Natural killer cell (primary cell): ENCODE measurements at regions of chr4 and their contacts with region 1.

Region 1: GRCh38 chr4:68375667-68376559 is 26.0 kb upstream of the YTHDC1 start:
- DNase-seq: peak in 1 of 2 donors; percentile 80
- ATAC-seq: peak; percentile 82 to 92 (median 87)
- H3K4me3 ChIP-seq: no peak overlapping the region
- H3K4me3 Mint-ChIP-seq: no peak overlapping the region
- H3K27ac ChIP-seq: no peak overlapping the region
- H3K27ac Mint-ChIP-seq: no peak overlapping the region
- H3K4me1 ChIP-seq: peaks cover 9% of the 10 kb centered on the region
- H3K4me1 Mint-ChIP-seq: peaks cover 8 to 14% of the 10 kb centered on the region in 2 donors
- H3K27me3 ChIP-seq: no peaks in the 10 kb centered on the region
- H3K27me3 Mint-ChIP-seq: peaks cover 16 to 31% of the 10 kb centered on the region in 2 donors
- CTCF ChIP-seq: peak; percentile 82

Region 2: GRCh38 chr4:68271851-68272756 is 103.8 kb before region 1 on chr4:
- intact Hi-C with region 1: loop called (anchors 1 kb)
- DNase-seq: peak in 1 of 2 donors; percentile 66
- ATAC-seq: peak; percentile 74 to 89 (median 87)
- H3K4me3 ChIP-seq: no peak overlapping the region
- H3K4me3 Mint-ChIP-seq: peak overlapping the region; percentile 40
- H3K27ac ChIP-seq: no peak overlapping the region
- H3K27ac Mint-ChIP-seq: no peak overlapping the region
- H3K4me1 ChIP-seq: peaks cover 8% of the 10 kb centered on the region
- H3K4me1 Mint-ChIP-seq: peaks cover 10 to 16% of the 10 kb centered on the region in 2 donors
- H3K27me3 ChIP-seq: no peaks in the 10 kb centered on the region
- H3K27me3 Mint-ChIP-seq: peaks cover 0 to 4% of the 10 kb centered on the region in 2 donors
- CTCF ChIP-seq: peak; percentile 78